Activated CD4-positive, alpha-beta T cell treated with anti-CD3 and anti-CD28 coated beads for 36 hours (primary cell): ENCODE measurements at regions of chr1 and their contacts with region 1.

Region 1: DNA sequence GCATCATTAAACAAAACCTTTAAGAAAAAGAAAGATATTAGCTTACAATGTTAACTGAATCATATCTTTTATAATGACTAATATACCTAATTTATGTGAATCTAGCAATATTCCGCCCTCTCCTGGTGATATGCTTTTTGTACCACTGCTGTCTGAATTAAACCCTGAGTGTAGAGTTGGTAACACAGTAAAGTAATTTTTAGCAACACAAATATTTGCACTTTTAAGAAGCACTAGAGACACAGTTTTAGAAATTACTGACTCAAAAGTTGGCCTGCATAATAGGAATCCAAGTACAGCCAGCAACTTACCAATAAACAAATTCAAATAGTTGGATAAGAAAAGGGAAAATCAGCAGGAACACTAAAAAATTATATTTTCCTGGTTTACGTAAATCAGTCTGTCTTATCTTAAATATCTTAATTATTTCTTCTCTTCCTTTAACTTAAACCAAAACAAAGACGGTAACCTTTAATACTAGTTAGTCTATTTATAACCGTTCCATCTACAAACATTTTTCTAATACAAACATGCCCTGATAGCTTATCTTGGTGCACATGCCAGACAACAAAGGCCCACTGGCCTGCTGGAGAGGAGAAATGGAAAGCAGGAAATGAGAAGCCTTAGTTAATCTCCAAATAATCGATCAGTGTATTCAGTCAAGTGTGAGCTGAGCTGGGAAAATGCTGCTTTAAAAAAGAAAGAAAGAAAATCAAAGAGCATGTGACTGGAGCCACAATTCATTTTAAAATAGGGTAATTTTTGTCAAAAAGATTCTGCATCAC is 246.0 kb downstream of the RERE start:
- DNase-seq: no peak
- ATAC-seq: no peak
- H3K4me3 Mint-ChIP-seq: no peak overlapping the region
- H3K27ac Mint-ChIP-seq: no peak overlapping the region
- H3K4me1 Mint-ChIP-seq: peaks cover 6% of the 10 kb centered on the region
- H3K27me3 Mint-ChIP-seq: no peaks in the 10 kb centered on the region

Region 2: DNA sequence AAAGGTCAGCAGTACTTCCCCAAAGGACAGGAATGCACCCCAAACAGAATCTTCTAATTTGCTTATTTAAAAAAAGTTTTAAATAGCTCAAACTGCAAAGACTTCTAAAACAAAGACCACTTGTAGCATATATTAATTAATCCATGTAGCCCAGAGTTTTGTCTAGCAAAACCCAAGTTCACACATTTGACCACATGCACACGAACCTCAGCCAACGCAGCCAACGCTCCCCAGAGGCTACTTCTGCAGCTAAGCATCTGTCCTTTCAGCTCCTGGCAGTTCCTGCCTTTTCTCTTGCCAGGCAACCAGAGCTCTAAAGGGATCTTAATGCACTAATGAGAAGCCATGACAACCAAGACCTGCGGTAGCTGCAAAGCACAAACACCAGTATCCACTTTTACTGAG is 156.4 kb after region 1 on chr1:
- CTCF ChIA-PET with region 1: interaction called, 16 read pairs
- POLR2A ChIA-PET with region 1: interaction called, 3 read pairs
- intact Hi-C with region 1: no loop called
- DNase-seq: no peak
- ATAC-seq: no peak
- H3K4me3 Mint-ChIP-seq: no peak overlapping the region
- H3K27ac Mint-ChIP-seq: no peak overlapping the region
- H3K4me1 Mint-ChIP-seq: peaks cover 16% of the 10 kb centered on the region
- H3K27me3 Mint-ChIP-seq: no peaks in the 10 kb centered on the region